ENCODE measurements at regions of chrX and their contacts with region 1.

Region 1: GRCh38 chrX:131633285-131633917 is 89.5 kb downstream of the OR13H1 start:
- DNase-seq: peak; percentile 79
- H3K4me3 Mint-ChIP-seq: no peak overlapping the region
- H3K27ac Mint-ChIP-seq: no peak overlapping the region
- H3K4me1 Mint-ChIP-seq: no peaks in the 10 kb centered on the region
- H3K27me3 Mint-ChIP-seq: no peaks in the 10 kb centered on the region

Region 2: GRCh38 chrX:130994671-130995070 is 638.7 kb before region 1 on chrX:
- intact Hi-C with region 1: loop called (anchors 5 kb)
- DNase-seq: peak; percentile 61
- H3K4me3 Mint-ChIP-seq: no peak overlapping the region
- H3K27ac Mint-ChIP-seq: no peak overlapping the region
- H3K4me1 Mint-ChIP-seq: no peaks in the 10 kb centered on the region
- H3K27me3 Mint-ChIP-seq: no peaks in the 10 kb centered on the region

Region 3: GRCh38 chrX:131068945-131069719 is 564.3 kb before region 1 on chrX:
- intact Hi-C with region 1: loop called (anchors 2 kb)
- DNase-seq: peak; percentile 52
- H3K4me3 Mint-ChIP-seq: no peak overlapping the region
- H3K27ac Mint-ChIP-seq: no peak overlapping the region
- H3K4me1 Mint-ChIP-seq: no peaks in the 10 kb centered on the region
- H3K27me3 Mint-ChIP-seq: peaks cover 43% of the 10 kb centered on the region